Right lobe of liver (tissue), 6 donors: ENCODE measurements at regions of chr2 and their contacts with region 1.

Region 1: GRCh38 chr2:237413777-237414661 is at the start of gene COL6A3:
- DNase-seq: no peak
- ATAC-seq: peak; percentile 19 to 37 (median 26)
- H3K4me3 ChIP-seq: peak within 1 kb of the TSS; percentile 12 to 32 (median 27)
- H3K27ac ChIP-seq: peak within 1 kb of the TSS; percentile 26 to 60 (median 29)
- H3K4me1 ChIP-seq: no peaks in the 10 kb centered on the region
- H3K27me3 ChIP-seq: no peaks in the 10 kb centered on the region
- CTCF ChIP-seq: no peak
- POLR2A ChIP-seq: no peak
- total RNA-seq, gene COL6A3: 4.5 to 21.1 (median 8.8) TPM

Region 2: GRCh38 chr2:237154082-237154638 is 259.9 kb before region 1 on chr2:
- intact Hi-C with region 1: loop called in 1 of 2 experiments (anchors 10 kb)
- DNase-seq: no peak
- ATAC-seq: peak; percentile 56 to 71 (median 65)
- H3K4me3 ChIP-seq: no peak overlapping the region
- H3K27ac ChIP-seq: no peak overlapping the region
- H3K4me1 ChIP-seq: no peaks in the 10 kb centered on the region
- H3K27me3 ChIP-seq: no peaks in the 10 kb centered on the region
- CTCF ChIP-seq: peak; percentile 55 to 60 (median 56)
- POLR2A ChIP-seq: no peak

Region 3: DNA sequence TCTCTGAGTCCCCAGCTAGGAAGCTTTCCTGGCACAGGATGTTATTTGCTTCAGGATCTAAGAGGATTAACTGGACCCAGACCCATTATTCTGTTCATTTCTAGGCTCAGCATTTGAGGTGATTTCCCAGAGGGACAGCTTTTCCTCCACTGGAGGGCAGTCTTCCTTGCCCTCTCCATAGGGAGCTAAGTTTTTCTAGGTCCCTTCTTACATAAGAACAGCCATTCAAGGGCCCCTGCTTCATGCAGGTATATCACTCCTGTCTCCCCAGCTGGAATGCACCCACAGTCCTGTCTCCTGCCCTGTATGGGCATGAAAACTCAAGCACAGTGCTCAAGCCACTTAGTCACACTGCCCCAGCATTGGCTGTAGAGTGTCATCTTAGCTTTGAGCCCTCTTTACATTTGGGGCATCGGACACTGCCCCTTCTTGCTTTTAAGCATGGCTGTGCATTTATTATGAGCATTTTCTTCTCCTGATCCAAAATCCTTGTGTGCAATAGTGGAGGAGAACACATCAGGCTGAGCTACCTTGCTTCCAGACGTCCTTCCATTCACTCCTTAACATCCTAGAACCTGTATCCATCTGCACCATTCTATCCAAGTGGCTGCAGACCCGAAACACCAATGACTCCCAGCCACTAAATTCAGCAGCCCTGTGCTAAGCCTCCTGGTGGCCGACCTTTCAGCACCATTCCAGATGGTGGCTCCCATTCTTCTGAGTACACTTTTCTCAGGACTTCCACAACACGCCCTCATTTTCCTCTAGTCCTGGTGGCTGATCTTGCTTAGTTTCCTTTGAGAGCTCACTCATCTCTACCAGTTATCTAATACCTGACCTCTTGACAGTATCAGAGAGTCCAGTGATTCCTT is 248.4 kb before region 1 on chr2:
- intact Hi-C with region 1: loop called in 1 of 2 experiments (anchors 10 kb)
- DNase-seq: no peak
- ATAC-seq: peak; percentile 38 to 56 (median 49)
- H3K4me3 ChIP-seq: no peak overlapping the region
- H3K27ac ChIP-seq: no peak overlapping the region
- H3K4me1 ChIP-seq: no peaks in the 10 kb centered on the region
- H3K27me3 ChIP-seq: no peaks in the 10 kb centered on the region
- CTCF ChIP-seq: peak; percentile 9 to 59 (median 47)
- POLR2A ChIP-seq: no peak

Region 4: DNA sequence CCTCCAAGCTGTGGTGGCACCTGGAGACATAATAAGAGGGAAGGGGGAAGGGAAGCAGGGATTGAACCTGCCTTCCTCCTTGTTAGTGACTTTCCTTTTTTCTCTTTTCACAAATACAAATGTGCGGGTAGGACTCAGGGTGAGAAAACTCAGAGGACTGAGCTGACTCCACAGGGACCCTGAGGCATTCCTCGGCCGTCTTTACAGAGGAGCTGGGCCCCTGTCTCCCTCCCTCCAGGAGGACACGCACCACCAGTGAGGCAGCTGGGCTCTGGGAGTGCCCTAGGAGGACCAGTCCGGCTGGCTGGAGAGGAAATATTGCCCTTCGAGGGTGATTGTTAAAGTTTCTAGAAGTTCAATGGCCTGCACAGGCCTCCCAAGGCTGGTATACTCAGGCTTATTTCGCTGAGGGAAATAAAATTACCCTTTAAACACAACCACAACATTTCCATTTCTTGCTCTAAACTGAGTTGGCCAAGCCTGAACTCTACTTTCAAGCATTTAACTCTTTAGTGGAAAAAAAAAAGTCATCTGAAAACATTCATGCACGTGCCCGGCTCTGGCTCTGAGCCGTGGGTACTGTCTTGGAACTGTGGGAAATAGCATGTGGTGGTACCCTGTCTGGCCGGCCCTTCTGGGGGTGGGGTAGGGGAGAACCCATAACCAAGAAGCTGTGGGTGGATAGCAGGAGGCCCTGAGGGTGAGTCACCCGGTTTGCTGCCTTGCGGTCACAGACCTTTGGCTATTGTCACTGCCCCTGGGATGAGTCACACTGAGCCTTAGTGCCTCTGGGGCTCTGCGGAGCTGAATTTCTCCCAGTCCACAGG is 212.3 kb before region 1 on chr2:
- intact Hi-C with region 1: no loop called
- DNase-seq: no peak
- ATAC-seq: peak in 3 of 4 donors; percentile 11 to 69 (median 28)
- H3K4me3 ChIP-seq: no peak overlapping the region
- H3K27ac ChIP-seq: no peak overlapping the region
- H3K4me1 ChIP-seq: no peaks in the 10 kb centered on the region
- H3K27me3 ChIP-seq: no peaks in the 10 kb centered on the region
- CTCF ChIP-seq: no peak
- POLR2A ChIP-seq: no peak

Region 5: DNA sequence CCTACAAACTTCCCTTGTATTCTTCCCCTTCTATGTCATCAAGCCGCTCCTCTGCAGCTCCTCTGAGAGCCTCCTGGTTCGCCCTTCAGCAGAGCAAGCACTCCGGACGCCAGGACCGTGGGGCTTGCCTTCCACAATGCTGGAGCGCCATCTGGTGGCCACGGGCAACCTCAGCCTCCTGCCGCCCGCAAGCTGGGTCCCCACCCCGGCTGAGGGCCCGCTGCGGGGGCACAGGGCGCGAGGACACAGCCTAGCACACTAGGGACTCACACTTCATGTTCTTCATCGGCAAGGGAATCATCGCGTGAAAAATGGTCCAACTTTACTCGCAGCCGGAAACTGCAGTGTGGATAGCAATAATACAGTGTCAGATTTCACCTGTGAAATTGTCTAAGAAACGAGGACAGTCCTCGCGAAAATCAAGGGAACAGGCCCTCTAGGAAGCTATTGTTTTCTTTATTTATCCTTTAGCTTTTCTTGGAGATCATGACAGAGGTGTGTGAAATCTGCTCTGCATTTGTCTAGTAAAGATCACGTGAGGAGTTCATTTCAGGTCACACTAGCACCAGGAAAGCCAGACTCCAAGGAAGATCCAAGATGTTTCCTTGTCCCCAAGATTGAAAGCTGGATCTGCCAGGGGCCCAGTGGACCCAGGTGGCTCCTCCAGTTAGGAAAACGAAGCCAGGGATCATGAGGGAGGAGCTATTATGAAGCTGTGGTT is 158.2 kb after region 1 on chr2:
- intact Hi-C with region 1: no loop called
- DNase-seq: peak; percentile 90 to 92 (median 92)
- ATAC-seq: peak; percentile 84 to 90 (median 86)
- H3K4me3 ChIP-seq: no peak overlapping the region
- H3K27ac ChIP-seq: peak overlapping the region in 2 of 3 donors; percentile 42 to 86
- H3K4me1 ChIP-seq: peaks cover 0 to 20% (median 6%) of the 10 kb centered on the region in 4 donors
- H3K27me3 ChIP-seq: no peaks in the 10 kb centered on the region
- CTCF ChIP-seq: peak; percentile 97 to 99 (median 99)
- POLR2A ChIP-seq: no peak

Region 6: DNA sequence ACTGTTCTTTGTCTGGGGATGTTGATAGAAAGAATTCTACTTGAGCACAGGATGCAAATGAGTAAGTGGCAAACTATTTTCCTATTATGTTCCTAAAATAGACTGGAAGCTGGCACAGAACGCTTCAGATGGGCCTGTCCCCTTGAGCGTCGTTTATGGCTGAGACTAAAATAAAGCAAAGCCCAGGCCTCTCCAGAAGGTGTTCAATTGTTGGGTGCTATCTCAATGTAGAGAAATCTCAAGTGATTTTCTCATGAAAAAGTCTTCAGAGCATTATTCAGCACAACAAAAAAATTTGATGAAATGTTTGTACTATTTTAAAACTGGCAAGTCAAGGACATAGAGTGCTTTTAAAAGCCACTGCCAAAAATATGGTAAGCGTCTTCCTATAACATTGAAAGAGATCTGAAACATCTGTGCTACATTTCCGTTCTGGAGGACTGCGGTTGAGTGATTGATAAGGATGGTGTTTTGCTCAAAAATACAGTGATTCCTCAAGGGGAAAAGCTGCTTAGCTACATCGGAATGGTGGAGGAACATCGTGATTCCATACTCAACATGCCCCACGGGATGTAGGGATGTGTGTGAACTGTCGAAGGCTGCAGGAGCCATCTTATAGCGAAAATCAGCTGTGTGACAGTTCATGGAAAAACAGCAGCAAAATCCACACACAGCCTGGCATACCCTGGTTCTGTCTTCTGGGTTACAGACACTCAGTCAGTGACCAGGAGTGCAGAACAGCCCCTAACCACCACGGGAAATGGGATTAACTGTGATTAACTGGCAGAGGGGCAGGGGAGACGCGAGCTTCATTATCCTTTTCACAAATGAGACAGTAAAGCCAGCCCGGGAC is 202.9 kb after region 1 on chr2:
- intact Hi-C with region 1: no loop called
- DNase-seq: no peak
- ATAC-seq: peak in 2 of 4 donors; percentile 25 to 34
- H3K4me3 ChIP-seq: no peak overlapping the region
- H3K27ac ChIP-seq: no peak overlapping the region
- H3K4me1 ChIP-seq: no peaks in the 10 kb centered on the region
- H3K27me3 ChIP-seq: no peaks in the 10 kb centered on the region
- CTCF ChIP-seq: no peak
- POLR2A ChIP-seq: no peak

Region 7: DNA sequence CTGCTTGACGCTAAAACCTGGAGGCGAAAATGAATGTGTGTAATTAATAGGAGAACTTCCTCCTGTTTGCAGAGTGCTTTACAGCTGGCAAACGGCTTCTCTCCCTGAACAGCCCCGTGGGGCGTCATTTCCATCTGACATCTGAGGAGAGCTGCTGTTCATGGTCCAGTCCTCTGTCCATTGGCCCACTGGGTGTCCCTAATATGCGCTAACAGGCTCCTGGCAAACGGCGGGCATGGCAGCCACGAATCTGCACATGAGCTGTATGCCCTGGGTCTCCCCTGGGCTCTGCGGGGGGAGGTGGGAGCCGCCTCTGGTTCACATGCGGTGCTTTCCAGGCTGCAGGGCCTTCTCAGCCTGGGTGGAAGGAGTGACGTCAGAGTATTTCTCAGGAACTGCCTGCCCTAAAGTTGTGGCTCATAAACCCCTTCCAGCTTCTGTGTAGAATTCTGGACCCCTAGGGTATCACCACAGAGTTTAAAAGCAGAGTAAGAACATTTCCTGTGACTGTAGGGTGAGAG is 286.6 kb after region 1 on chr2:
- intact Hi-C with region 1: no loop called
- DNase-seq: no peak
- ATAC-seq: peak in 2 of 4 donors; percentile 20
- H3K4me3 ChIP-seq: no peak overlapping the region
- H3K27ac ChIP-seq: peak overlapping the region in 2 of 3 donors; percentile 23 to 33
- H3K4me1 ChIP-seq: peaks cover 0 to 41% (median 1%) of the 10 kb centered on the region in 4 donors
- H3K27me3 ChIP-seq: no peaks in the 10 kb centered on the region
- CTCF ChIP-seq: no peak
- POLR2A ChIP-seq: no peak